ENCODE measurements at regions of chr10 and their contacts with region 1.

Region 1: GRCh38 chr10:127161482-127161881 is 34.9 kb downstream of the INSYN2A start:
- H3K4me3 Mint-ChIP-seq: no peak overlapping the region
- H3K27ac Mint-ChIP-seq: no peak overlapping the region
- H3K4me1 Mint-ChIP-seq: no peaks in the 10 kb centered on the region
- H3K27me3 Mint-ChIP-seq: no peaks in the 10 kb centered on the region

Region 2: DNA sequence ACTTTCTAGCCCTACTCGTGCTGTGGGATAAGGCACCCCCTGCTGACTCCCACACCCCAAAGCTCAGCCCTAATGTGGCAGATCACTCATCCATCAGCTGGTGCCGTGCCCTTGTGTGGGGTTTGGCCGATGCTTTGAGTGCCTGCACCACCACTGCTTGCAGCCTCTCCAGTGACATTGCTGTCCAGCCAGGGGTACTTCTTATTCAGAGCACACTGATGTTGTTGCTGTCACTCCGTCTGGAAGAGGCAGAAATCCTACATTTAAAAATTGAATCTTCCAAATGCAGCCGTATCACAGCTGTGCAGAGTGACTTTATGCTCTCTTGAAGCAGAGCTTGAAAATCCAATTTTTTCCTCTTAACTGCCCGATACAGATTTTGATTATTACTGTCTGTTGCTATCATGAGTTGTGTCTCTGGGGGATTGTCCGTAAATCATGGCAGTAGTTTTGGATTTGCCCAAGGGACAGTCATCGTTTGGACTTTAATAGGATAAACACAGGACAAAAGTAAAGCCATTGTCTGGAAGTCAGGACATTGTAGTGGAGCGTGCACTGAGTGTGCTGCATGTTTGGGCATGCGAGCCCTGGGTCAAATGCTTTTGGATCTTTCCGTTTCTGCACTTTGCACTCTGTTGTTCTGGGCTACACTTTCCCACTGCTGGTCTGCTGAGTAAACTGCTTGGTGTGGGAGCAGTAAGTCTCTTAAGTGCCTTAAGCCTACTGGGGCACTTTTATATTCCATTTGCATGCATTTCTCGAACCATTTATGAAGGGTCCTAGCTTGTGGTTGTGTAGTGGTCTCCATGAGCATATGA is 128.1 kb before region 1 on chr10:
- intact Hi-C with region 1: no loop called
- H3K4me3 Mint-ChIP-seq: no peak overlapping the region
- H3K27ac Mint-ChIP-seq: no peak overlapping the region
- H3K4me1 Mint-ChIP-seq: no peaks in the 10 kb centered on the region
- H3K27me3 Mint-ChIP-seq: no peaks in the 10 kb centered on the region

Region 3: DNA sequence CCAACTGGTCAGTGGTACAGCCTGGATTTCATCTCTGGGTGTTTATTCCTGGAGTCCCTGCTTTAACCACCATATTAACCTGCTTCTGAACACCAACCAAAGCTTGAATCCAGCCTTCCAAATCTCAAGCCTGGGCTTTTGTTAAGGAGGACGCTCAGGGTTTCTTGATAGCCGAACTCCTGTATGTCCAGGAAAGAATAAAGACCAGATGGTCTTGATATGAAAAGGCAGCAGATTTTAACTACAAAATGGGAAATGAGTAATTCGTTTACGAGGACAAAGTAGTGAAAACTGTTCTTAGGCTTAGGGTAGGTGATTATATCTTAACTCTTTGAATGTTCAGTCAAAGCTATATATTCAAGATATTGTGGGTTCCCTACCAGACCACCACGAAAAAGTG is 164.0 kb after region 1 on chr10:
- intact Hi-C with region 1: loop called (anchors 5 kb)
- H3K4me3 Mint-ChIP-seq: no peak overlapping the region
- H3K27ac Mint-ChIP-seq: no peak overlapping the region
- H3K4me1 Mint-ChIP-seq: no peaks in the 10 kb centered on the region
- H3K27me3 Mint-ChIP-seq: no peaks in the 10 kb centered on the region